ENCODE measurements at regions of chr3 and their contacts with region 1.

Region 1: DNA sequence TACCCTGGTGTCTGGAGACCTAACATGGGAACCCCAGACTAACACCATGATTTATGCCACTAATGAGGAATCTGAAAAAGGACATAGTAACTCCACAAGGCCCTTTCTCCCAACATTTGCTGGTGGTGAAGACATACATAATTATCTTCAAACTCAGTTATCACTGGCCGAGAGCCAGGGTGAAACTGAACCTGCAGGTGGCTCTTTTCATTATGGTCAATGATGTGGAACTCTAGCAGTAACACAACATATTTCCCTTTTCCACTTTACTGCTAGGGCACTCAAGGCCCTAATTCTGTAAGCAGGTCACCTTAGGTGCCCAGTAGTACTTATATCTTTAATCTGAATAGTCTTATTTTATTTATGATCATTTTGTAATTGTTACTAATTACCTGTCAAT is 326.4 kb upstream of the SATB1 start:
- DNase-seq: no peak
- H3K4me3 ChIP-seq: no peak overlapping the region
- H3K27ac ChIP-seq: no peak overlapping the region
- H3K4me1 ChIP-seq: no peaks in the 10 kb centered on the region
- H3K27me3 ChIP-seq: no peaks in the 10 kb centered on the region
- CTCF ChIP-seq: no peak

Region 2: GRCh38 chr3:18635215-18635614 is 116.3 kb before region 1 on chr3:
- intact Hi-C with region 1: loop called (anchors 5 kb)
- DNase-seq: no peak
- H3K4me3 ChIP-seq: no peak overlapping the region
- H3K27ac ChIP-seq: no peak overlapping the region
- H3K4me1 ChIP-seq: no peaks in the 10 kb centered on the region
- H3K27me3 ChIP-seq: no peaks in the 10 kb centered on the region
- CTCF ChIP-seq: no peak

Region 3: DNA sequence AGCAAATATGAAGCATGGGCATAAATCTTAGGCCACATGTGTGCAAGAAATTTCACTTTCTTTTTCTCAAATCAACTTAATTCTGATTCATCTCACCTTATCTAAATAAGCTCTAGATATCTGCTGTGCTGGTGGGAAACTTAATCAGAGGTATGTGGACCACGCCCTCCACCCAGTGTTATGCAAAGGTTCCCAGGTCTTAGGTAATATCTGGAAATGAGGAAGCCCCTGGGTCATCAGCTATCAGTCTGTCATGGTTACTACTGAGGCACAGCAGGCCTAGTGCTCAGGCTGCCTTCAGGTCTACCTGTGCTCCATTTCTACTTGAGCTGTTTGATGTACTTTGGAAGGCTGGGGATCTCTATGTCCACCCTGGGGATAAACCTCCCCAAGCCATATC is 262.4 kb after region 1 on chr3:
- intact Hi-C with region 1: no loop called
- DNase-seq: no peak
- H3K4me3 ChIP-seq: no peak overlapping the region
- H3K27ac ChIP-seq: no peak overlapping the region
- H3K4me1 ChIP-seq: no peaks in the 10 kb centered on the region
- H3K27me3 ChIP-seq: no peaks in the 10 kb centered on the region
- CTCF ChIP-seq: no peak